K562 (cell line): ENCODE measurements at regions of chr12 and their contacts with region 1.

Region 1: GRCh38 chr12:82685790-82686167 is 927 bp upstream of the TMTC2 start:
- DNase-seq: peak; percentile 62 to 86 (median 66)
- ATAC-seq: peak; percentile 93
- H3K4me3 ChIP-seq: peak overlapping the region; percentile 44
- H3K27ac ChIP-seq: no peak overlapping the region
- H3K4me1 ChIP-seq: peaks cover 0 to 15% of the 10 kb centered on the region in 2 experiments; a peak in 3 of 5 replicates
- H3K27me3 ChIP-seq: peaks cover 0 to 5% of the 10 kb centered on the region in 2 experiments; a peak in 2 of 5 replicates
- CTCF ChIP-seq: peak; percentile 68 to 91 (median 76)
- EP300 ChIP-seq: no peak
- POLR2A ChIP-seq: no peak
- RAD21 ChIP-seq: peak; percentile 61 to 78

Region 2: GRCh38 chr12:82855872-82856271 is 170.1 kb after region 1 on chr12:
- CTCF ChIA-PET with region 1: no interaction called
- POLR2A ChIA-PET with region 1: no interaction called
- in situ Hi-C with region 1: no loop called
- intact Hi-C with region 1: no loop called
- DNase-seq: no peak
- ATAC-seq: no peak
- H3K4me3 ChIP-seq: no peak overlapping the region
- H3K27ac ChIP-seq: no peak overlapping the region
- H3K4me1 ChIP-seq: no peaks in the 10 kb centered on the region
- H3K27me3 ChIP-seq: no peaks in the 10 kb centered on the region
- CTCF ChIP-seq: no peak
- EP300 ChIP-seq: no peak
- POLR2A ChIP-seq: no peak
- RAD21 ChIP-seq: no peak

Region 3: DNA sequence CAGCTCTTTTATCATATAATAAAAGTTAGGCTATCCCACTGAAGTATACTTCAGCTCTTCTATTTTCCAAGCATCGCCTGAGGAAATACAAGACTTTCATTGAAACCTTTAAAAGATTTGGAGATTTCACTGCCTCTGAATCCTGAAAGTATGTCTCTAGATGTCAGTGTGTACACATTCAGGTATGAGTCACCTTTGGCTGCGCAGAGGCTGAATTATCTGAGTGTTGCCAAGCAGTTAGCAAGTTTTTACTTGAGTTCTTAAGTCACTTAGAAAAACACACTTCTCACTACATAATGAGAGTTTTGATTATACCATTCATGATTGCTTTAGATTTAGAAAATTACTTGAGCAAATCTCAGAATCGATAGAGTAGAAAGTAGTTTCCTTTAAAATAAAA is 211.2 kb after region 1 on chr12:
- CTCF ChIA-PET with region 1: no interaction called
- POLR2A ChIA-PET with region 1: no interaction called
- in situ Hi-C with region 1: no loop called
- intact Hi-C with region 1: loop called (anchors 10 kb)
- DNase-seq: no peak
- ATAC-seq: no peak
- H3K4me3 ChIP-seq: no peak overlapping the region
- H3K27ac ChIP-seq: no peak overlapping the region
- H3K4me1 ChIP-seq: no peaks in the 10 kb centered on the region
- H3K27me3 ChIP-seq: no peaks in the 10 kb centered on the region
- CTCF ChIP-seq: no peak
- EP300 ChIP-seq: no peak
- POLR2A ChIP-seq: no peak
- RAD21 ChIP-seq: no peak

Region 4: GRCh38 chr12:83005534-83006197 is 319.9 kb after region 1 on chr12:
- CTCF ChIA-PET with region 1: no interaction called
- POLR2A ChIA-PET with region 1: no interaction called
- in situ Hi-C with region 1: no loop called
- intact Hi-C with region 1: loop called (anchors 2 kb)
- DNase-seq: no peak
- ATAC-seq: no peak
- H3K4me3 ChIP-seq: no peak overlapping the region
- H3K27ac ChIP-seq: no peak overlapping the region
- H3K4me1 ChIP-seq: no peaks in the 10 kb centered on the region; a peak in 1 of 5 replicates
- H3K27me3 ChIP-seq: no peaks in the 10 kb centered on the region
- CTCF ChIP-seq: no peak
- EP300 ChIP-seq: no peak
- POLR2A ChIP-seq: no peak
- RAD21 ChIP-seq: no peak

Region 5: GRCh38 chr12:83389237-83389996 is 703.6 kb after region 1 on chr12:
- CTCF ChIA-PET with region 1: no interaction called
- POLR2A ChIA-PET with region 1: no interaction called
- in situ Hi-C with region 1: no loop called
- intact Hi-C with region 1: loop called (anchors 2 kb)
- DNase-seq: peak in 2 of 4 experiments; percentile 10 to 48
- ATAC-seq: peak; percentile 90
- H3K4me3 ChIP-seq: no peak overlapping the region
- H3K27ac ChIP-seq: no peak overlapping the region
- H3K4me1 ChIP-seq: no peaks in the 10 kb centered on the region
- H3K27me3 ChIP-seq: no peaks in the 10 kb centered on the region
- CTCF ChIP-seq: peak; percentile 45 to 59 (median 58); a peak in 5 of 6 replicates
- EP300 ChIP-seq: no peak
- POLR2A ChIP-seq: no peak
- RAD21 ChIP-seq: peak; percentile 37 to 71; a peak in 3 of 4 replicates

Region 6: GRCh38 chr12:83823431-83823963 is 1137.7 kb after region 1 on chr12:
- CTCF ChIA-PET with region 1: no interaction called
- POLR2A ChIA-PET with region 1: no interaction called
- in situ Hi-C with region 1: no loop called
- intact Hi-C with region 1: loop called (anchors 5 kb)
- DNase-seq: peak in 3 of 4 experiments; percentile 5 to 20 (median 5)
- ATAC-seq: peak; percentile 49; the same call in 1 of the 3 replicates
- H3K4me3 ChIP-seq: no peak overlapping the region
- H3K27ac ChIP-seq: no peak overlapping the region
- H3K4me1 ChIP-seq: no peaks in the 10 kb centered on the region
- H3K27me3 ChIP-seq: no peaks in the 10 kb centered on the region
- CTCF ChIP-seq: peak; percentile 23 to 40 (median 25); a peak in 3 of 6 replicates
- EP300 ChIP-seq: no peak
- POLR2A ChIP-seq: no peak
- RAD21 ChIP-seq: peak in 1 of 2 experiments; percentile 49; a peak in 3 of 4 replicates

Region 7: DNA sequence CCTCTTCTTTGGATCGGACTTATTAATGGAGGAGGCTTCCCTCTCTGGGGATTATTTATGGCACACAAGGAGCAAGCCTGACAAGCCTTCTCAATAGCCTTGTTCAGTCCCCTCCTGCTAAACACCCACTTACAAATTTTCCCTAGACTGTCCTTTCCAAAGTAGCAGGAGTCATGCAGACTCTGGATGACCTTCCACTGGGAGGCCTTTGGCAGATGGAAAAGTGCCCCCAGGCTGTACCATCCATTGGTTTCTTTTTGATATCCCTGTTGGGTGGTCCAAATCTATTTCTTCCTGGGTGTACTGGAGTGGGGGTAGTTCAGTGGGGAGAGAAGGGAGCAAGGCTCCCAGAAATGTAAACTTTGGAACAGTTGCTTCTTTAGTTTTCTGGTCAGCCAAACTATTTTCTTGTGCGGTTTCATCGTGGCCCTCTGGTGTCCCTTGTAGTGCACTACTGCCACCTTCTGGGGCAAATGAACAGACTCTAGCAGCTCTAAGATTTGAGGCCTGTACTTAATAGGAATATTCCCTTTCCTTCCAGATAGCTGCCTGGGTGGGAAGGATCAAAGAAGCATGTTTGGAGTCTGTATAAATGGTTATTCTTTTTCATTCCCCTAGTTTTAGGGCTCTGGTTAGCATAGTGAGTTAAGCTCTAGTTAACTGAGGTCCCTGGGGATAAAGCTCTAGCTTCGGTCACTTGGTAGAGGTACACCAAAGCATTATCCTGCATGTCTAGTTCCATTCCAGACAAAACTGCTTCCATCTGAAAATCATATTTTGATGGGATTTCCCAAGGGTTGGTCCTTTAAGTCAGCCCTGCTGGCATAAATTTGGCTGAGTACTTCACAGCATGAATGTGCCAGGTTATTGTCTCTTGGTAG is 1817.4 kb after region 1 on chr12:
- CTCF ChIA-PET with region 1: no interaction called
- POLR2A ChIA-PET with region 1: no interaction called
- in situ Hi-C with region 1: no loop called
- intact Hi-C with region 1: loop called (anchors 2 kb)
- DNase-seq: peak; percentile 8 to 16 (median 9)
- ATAC-seq: no peak
- H3K4me3 ChIP-seq: no peak overlapping the region
- H3K27ac ChIP-seq: no peak overlapping the region
- H3K4me1 ChIP-seq: no peaks in the 10 kb centered on the region
- H3K27me3 ChIP-seq: no peaks in the 10 kb centered on the region
- CTCF ChIP-seq: peak in 2 of 3 experiments; percentile 19 to 24; a peak in 2 of 6 replicates
- EP300 ChIP-seq: no peak
- POLR2A ChIP-seq: no peak
- RAD21 ChIP-seq: peak; percentile 48 to 53